Ascending aorta (tissue), 2 donors: ENCODE measurements at regions of chr13 and their contacts with region 1.

Region 1: DNA sequence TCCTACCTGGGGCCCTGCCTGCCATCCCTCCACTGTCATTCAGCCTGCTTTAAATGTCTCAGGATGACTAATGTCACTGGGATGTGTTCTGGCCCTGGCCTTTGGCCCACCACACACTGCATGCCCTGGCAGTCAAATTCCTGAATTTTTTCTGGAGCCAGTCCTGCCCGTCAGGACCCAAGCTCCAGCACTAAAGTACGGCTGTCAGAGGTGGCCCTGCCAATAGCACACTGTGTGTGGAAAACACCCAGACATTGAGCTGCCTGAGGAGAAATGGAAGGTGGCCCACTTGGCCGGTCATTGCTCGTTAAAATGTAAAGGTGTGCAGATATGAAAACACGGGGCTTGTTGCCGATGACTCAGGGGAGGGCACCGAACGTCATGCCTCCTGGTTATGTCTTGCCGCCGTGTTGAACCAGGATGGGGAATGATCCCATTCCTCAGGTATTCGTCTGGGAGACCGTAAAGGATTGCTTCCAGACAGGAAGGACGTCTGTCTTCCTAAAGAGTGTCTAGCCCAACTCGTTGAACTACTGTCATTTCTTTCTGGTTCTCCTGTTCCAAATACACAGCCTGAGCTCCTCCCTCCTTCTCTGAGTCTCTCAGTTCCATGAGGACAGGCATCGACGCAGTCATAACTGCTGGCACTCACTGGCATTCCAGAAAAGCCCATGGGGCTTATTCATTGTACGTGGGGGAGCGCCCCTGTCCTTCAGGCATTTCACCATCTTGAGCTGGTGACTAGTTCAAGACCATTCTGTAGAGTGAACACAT is 40.6 kb downstream of the COL4A2 start:
- DNase-seq: peak; percentile 56 to 97
- H3K4me3 ChIP-seq: no peak overlapping the region
- H3K27ac ChIP-seq: peak overlapping the region; percentile 95 to 96
- H3K4me1 ChIP-seq: peaks cover 9 to 57% of the 10 kb centered on the region in 2 donors
- H3K27me3 ChIP-seq: no peaks in the 10 kb centered on the region
- CTCF ChIP-seq: no peak

Region 2: GRCh38 chr13:110006304-110006703 is 341.4 kb before region 1 on chr13:
- intact Hi-C with region 1: no loop called
- DNase-seq: no peak
- H3K4me3 ChIP-seq: no peak overlapping the region
- H3K27ac ChIP-seq: no peak overlapping the region
- H3K4me1 ChIP-seq: no peaks in the 10 kb centered on the region
- H3K27me3 ChIP-seq: no peaks in the 10 kb centered on the region
- CTCF ChIP-seq: no peak

Region 3: DNA sequence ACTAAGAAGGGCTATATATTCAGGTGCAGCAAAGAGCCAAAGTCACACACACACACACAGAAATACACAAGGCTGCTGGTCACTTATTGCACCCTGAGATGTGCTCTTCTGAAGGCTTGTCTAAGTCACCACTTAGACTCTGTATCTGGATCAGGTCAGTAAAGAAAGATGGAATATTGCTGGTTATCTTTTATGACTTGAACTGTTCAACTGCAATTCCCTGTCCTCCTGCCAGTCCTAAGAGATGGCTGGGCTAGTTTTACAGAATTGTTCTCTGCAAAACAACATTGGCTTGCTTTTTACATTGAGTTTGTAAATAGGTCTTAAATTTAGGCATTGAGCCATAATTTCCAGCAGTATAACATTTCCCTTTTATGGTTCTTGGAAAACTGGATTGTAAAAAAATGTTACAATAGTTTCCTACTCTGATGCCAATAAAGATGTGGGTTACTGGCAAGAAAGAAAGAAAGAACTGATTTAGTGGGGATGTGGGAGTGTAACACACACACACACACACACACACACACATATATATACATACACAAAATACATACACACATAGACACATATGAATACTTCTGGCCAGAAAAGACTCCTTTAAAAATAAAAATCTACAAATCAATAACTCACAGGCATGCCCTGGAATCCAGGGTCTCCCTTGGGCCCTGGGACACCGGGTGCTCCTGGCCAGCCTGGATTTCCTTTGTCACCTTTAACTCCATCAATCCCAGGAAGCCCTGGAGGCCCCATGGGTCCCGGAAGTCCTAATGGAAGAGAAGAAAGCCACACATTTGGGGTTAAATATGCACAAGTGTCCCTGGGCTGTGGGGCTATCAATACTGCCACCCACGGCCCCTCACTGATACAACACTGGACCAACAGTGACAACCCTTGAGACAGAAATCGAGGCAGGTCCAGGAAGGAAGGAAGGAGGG is 178.5 kb before region 1 on chr13:
- intact Hi-C with region 1: no loop called
- DNase-seq: no peak
- H3K4me3 ChIP-seq: no peak overlapping the region
- H3K27ac ChIP-seq: peak overlapping the region; percentile 64 to 73
- H3K4me1 ChIP-seq: peaks cover 0 to 5% of the 10 kb centered on the region in 2 donors
- H3K27me3 ChIP-seq: no peaks in the 10 kb centered on the region
- CTCF ChIP-seq: no peak

Region 4: DNA sequence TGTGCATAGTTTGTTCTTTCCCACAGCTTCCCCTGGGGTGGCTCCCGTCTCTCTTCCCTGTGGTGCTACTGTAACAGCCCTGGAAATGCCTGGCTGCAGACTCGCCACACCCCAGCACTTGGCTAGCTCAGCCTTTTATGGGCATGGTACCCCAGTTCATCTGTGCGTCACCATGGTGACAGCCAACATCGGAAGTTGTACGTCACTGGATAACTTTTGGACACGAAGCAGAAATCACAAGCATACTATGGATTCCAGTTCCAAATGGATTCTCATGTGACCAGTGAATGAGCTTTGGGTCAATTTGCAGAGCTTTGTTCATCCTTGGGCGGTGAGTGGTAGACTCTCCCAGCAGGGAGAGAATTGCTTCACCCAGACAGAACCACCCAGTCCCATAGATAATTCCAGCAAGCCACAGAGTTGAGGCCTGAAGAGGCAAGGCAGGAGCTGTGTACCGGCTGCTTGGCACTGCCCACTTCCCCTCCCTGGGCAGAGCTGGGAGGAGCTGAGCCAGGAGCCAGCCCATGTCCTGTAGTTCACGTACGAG is 13.7 kb after region 1 on chr13:
- intact Hi-C with region 1: loop called (anchors 1 kb)
- DNase-seq: peak; percentile 54 to 97
- H3K4me3 ChIP-seq: no peak overlapping the region
- H3K27ac ChIP-seq: peak overlapping the region; percentile 81 to 92
- H3K4me1 ChIP-seq: peaks cover 24 to 49% of the 10 kb centered on the region in 2 donors
- H3K27me3 ChIP-seq: no peaks in the 10 kb centered on the region
- CTCF ChIP-seq: peak in 1 of 3 experiments; percentile 9

Region 5: GRCh38 chr13:110387391-110388107 is 39.8 kb after region 1 on chr13:
- intact Hi-C with region 1: loop called (anchors 2 kb)
- DNase-seq: peak; percentile 65 to 94
- H3K4me3 ChIP-seq: peak overlapping the region; percentile 7 to 50
- H3K27ac ChIP-seq: peak overlapping the region; percentile 98 to 99
- H3K4me1 ChIP-seq: peaks cover 14 to 52% of the 10 kb centered on the region in 2 donors
- H3K27me3 ChIP-seq: no peaks in the 10 kb centered on the region
- CTCF ChIP-seq: peak in 2 of 3 experiments; percentile 13 to 17

Region 6: DNA sequence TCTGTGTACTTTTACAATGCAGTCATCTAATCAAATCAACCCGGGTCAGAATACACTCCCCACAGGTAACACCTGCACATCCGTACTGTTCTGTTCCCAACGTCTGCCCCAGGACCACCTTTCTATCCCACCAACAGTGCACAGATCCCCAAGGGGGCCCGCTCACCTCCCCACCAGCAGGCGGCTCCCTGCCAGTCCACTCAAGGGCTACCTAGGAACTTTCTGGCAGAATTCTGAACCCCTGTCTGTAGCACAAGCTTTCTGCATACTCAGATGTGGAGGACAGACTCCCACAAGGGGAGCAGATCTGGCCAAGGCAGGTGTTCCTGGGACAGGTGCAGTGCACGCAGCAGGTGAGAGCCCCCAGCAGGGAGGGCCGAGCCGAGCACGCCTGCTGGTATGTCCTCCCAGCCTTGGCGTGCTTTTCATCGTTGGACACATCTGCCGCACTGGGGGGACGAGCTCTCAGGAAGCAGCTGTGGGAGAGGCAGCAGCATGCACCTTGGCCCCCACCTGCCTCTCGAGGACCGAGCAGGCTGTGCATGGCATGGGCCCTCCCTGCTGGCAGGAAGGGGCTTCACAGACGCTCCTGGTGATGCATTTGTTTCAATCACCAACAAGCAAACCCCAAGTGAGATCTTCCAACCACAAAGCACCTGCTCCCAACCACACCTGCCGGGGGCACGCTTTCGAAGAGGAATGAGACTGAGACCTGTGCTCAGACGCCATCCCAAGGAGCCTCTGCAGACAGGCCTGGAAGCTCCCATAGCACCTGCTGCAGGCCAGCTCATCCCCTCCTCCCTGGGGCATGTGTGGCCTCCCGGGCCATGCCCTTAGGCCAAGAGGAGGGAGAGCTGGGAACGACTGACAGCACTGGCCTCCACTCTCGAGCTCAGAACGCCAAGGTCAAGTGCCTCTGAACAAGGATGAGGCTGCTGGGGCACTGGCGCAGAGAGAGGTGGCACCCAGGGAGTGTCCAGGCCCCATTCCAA is 177.9 kb after region 1 on chr13:
- intact Hi-C with region 1: no loop called
- DNase-seq: no peak
- H3K4me3 ChIP-seq: no peak overlapping the region
- H3K27ac ChIP-seq: peak overlapping the region; percentile 89 to 90
- H3K4me1 ChIP-seq: peaks cover 45 to 86% of the 10 kb centered on the region in 2 donors
- H3K27me3 ChIP-seq: no peaks in the 10 kb centered on the region
- CTCF ChIP-seq: no peak